ENCODE measurements at regions of chr2 and their contacts with region 1.

Region 1: DNA sequence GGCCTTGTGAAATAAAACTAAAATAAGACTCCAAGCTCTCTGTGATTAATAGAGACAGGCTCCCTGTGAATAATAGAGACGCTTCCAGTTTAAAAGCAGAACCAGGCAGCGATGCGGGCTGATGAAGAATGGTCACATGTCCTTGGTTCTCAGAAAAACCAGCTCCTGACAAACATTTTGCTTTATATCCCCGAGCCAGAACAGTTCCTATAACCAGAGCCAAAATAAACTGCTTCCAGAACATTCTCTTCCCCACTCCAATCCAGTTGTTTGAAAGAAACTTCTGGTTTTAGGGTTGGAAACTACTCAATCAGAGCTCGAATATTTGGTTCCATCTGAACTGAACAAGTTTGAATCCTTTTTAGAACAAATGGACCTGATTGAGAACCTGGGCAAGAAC is 213.7 kb downstream of the TSN start:
- DNase-seq: peak in 1 of 2 donors; percentile 44
- ATAC-seq: peak in 2 of 4 donors; percentile 51 to 66
- H3K4me3 ChIP-seq: no peak overlapping the region
- H3K27ac ChIP-seq: no peak overlapping the region
- H3K4me1 ChIP-seq: no peaks in the 10 kb centered on the region
- H3K27me3 ChIP-seq: peaks cover 0 to 6% (median 0%) of the 10 kb centered on the region in 3 donors
- CTCF ChIP-seq: no peak

Region 2: GRCh38 chr2:121665504-121665903 is 303.7 kb before region 1 on chr2:
- intact Hi-C with region 1: no loop called
- DNase-seq: no peak
- ATAC-seq: peak; percentile 87 to 94 (median 89)
- H3K4me3 ChIP-seq: no peak overlapping the region
- H3K27ac ChIP-seq: peak overlapping the region; percentile 76
- H3K4me1 ChIP-seq: peaks cover 32% of the 10 kb centered on the region
- H3K27me3 ChIP-seq: no peaks in the 10 kb centered on the region
- CTCF ChIP-seq: no peak

Region 3: DNA sequence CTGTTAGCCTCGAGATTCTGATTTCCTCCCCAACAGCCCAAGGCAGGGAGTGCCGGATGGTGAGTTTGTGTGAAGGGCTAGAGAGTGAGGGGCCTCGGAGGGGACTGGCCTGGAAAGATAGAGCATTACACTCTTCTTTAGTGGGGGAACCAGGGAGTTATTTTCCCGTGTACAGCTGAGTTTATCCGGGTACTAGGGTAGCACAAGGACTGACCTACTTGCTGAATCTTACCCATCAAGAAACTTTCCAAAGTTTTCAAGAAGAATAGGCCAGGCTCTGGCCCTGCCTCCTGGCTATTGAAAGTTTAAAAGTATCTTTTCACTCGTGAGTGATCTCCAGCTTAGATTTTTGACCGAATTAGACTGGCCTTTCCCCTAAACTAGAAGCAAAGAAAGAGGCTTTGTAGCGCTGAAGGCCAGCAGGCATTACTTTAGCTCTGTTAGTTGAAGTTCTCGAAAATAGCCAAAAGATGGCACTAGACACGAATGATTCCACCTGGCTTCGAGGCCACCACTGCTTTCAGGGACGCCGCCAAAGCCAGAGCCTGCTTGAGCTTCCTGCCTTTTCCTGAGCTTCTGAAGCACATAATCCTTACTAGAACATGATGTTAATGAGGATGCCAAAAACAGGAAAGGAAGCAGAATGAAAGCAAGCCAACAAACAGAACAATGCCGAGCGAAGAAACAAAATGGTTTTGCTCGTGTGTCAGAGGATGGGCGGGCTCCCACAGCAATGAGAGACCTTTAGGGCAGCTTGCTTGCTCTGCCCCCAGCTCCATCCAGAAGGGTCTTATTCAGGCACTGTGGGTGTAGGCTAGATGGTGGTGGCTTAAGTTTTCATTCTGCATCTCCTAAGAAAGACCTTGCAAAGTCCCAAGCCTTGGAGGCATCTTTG is 158.0 kb before region 1 on chr2:
- intact Hi-C with region 1: loop called in 1 of 2 experiments (anchors 2 kb)
- DNase-seq: peak; percentile 64 to 75
- ATAC-seq: peak; percentile 60 to 80 (median 74)
- H3K4me3 ChIP-seq: no peak overlapping the region
- H3K27ac ChIP-seq: no peak overlapping the region
- H3K4me1 ChIP-seq: peaks cover 10% of the 10 kb centered on the region
- H3K27me3 ChIP-seq: no peaks in the 10 kb centered on the region
- CTCF ChIP-seq: peak; percentile 59